H1 (cell line): ENCODE measurements at regions of chr19 and their contacts with region 1.

Region 1: GRCh38 chr19:14048443-14049153 is 13.3 kb downstream of the PALM3 start:
- DNase-seq: peak; percentile 56 to 97
- H3K4me3 ChIP-seq: no peak overlapping the region
- H3K27ac ChIP-seq: no peak overlapping the region
- H3K4me1 ChIP-seq: no peaks in the 10 kb centered on the region; a peak in 1 of 7 replicates
- H3K27me3 ChIP-seq: no peaks in the 10 kb centered on the region
- CTCF ChIP-seq: peak; percentile 95 to 97 (median 96)
- EP300 ChIP-seq: no peak
- POLR2A ChIP-seq: no peak
- RAD21 ChIP-seq: peak; percentile 66 to 75

Region 2: GRCh38 chr19:13932911-13933393 is 115.6 kb before region 1 on chr19:
- CTCF ChIA-PET with region 1: interaction called, 19 read pairs
- POLR2A ChIA-PET with region 1: interaction called, 3 read pairs
- DNase-seq: no peak
- H3K4me3 ChIP-seq: no peak overlapping the region
- H3K27ac ChIP-seq: no peak overlapping the region
- H3K4me1 ChIP-seq: peaks cover 3 to 35% (median 15%) of the 10 kb centered on the region in 4 experiments
- H3K27me3 ChIP-seq: peaks cover 0 to 2% (median 0%) of the 10 kb centered on the region in 4 experiments; a peak in 1 of 7 replicates
- CTCF ChIP-seq: no peak
- EP300 ChIP-seq: no peak
- POLR2A ChIP-seq: no peak
- RAD21 ChIP-seq: no peak

Region 3: GRCh38 chr19:13986348-13986904 is 62.2 kb before region 1 on chr19:
- CTCF ChIA-PET with region 1: interaction called, 13 read pairs
- POLR2A ChIA-PET with region 1: no interaction called
- DNase-seq: peak; percentile 68 to 85
- H3K4me3 ChIP-seq: peak overlapping the region in 3 of 4 experiments; percentile 7 to 46 (median 26); a peak in 4 of 8 replicates
- H3K27ac ChIP-seq: peak overlapping the region; percentile 83; the same call in 1 of the 2 replicates
- H3K4me1 ChIP-seq: peaks cover 0 to 42% (median 36%) of the 10 kb centered on the region in 4 experiments; a peak in 6 of 7 replicates
- H3K27me3 ChIP-seq: no peaks in the 10 kb centered on the region
- CTCF ChIP-seq: no peak
- EP300 ChIP-seq: no peak
- POLR2A ChIP-seq: peak in 1 of 2 experiments; percentile 51; a peak in 1 of 3 replicates
- RAD21 ChIP-seq: no peak

Region 4: GRCh38 chr19:14031719-14032480 is 16.7 kb before region 1 on chr19 and contains the start of gene IL27RA:
- CTCF ChIA-PET with region 1: interaction called, 39 read pairs
- POLR2A ChIA-PET with region 1: interaction called, 4 read pairs
- DNase-seq: peak; percentile 31 to 84
- H3K4me3 ChIP-seq: peak within 1 kb of the TSS; percentile 58 to 78 (median 68)
- H3K27ac ChIP-seq: no peak within 1 kb of the TSS
- H3K4me1 ChIP-seq: peaks cover 0 to 9% (median 3%) of the 10 kb centered on the region in 4 experiments; a peak in 6 of 7 replicates
- H3K27me3 ChIP-seq: peaks cover 0 to 12% (median 9%) of the 10 kb centered on the region in 4 experiments; a peak in 5 of 7 replicates
- CTCF ChIP-seq: peak; percentile 76 to 82 (median 78)
- EP300 ChIP-seq: no peak
- POLR2A ChIP-seq: no peak
- RAD21 ChIP-seq: peak; percentile 58 to 68
- total RNA-seq, gene IL27RA: 14.7 and 15.1 TPM in 2 replicates

Region 5: DNA sequence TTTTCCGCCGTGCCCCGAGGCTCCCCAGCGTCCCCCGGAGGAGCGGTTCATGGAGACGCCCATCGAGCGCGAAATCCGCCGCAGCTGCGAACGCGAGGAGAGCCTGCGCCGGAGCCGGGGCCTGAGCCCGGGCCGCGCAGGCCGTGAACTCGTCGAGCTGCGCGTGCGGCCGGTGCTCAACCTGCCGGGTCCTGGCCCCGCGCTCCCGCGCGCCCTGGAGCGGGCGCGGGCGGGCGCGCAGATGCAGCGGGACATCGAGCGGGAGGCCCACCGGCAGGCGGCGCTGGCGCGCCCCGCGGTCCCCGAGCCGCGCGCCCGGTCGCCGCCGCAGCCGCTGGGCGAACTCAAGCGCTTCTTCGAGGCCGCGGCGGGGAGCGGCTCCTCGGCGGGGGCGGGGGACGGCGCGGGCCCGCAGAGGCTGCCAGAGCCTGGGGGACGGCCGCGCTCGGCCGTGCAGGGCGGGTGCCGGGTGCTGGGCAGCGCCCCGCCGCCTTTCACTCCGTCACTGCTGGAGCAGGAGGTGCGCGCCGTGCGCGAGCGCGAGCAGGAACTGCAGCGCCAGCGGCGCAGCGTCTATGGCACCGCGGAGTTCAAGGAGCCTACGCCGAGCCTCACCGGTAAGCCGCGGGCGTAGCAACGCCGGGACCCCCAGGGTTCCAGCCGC is 24.8 kb after region 1 on chr19:
- CTCF ChIA-PET with region 1: interaction called, 66 read pairs
- POLR2A ChIA-PET with region 1: no interaction called
- DNase-seq: peak in 1 of 2 experiments; percentile 86
- H3K4me3 ChIP-seq: peak overlapping the region; percentile 46 to 66 (median 50)
- H3K27ac ChIP-seq: no peak overlapping the region
- H3K4me1 ChIP-seq: peaks cover 0 to 15% (median 9%) of the 10 kb centered on the region in 4 experiments; a peak in 5 of 7 replicates
- H3K27me3 ChIP-seq: peaks cover 17 to 40% (median 32%) of the 10 kb centered on the region in 4 experiments
- CTCF ChIP-seq: peak; percentile 62 to 89 (median 83)
- EP300 ChIP-seq: no peak
- POLR2A ChIP-seq: no peak
- RAD21 ChIP-seq: peak in 1 of 2 experiments; percentile 19; a peak in 2 of 4 replicates

Region 6: GRCh38 chr19:14127929-14128509 is 79.4 kb after region 1 on chr19:
- CTCF ChIA-PET with region 1: no interaction called
- POLR2A ChIA-PET with region 1: no interaction called
- DNase-seq: no peak
- H3K4me3 ChIP-seq: no peak overlapping the region
- H3K27ac ChIP-seq: no peak overlapping the region
- H3K4me1 ChIP-seq: no peaks in the 10 kb centered on the region
- H3K27me3 ChIP-seq: no peaks in the 10 kb centered on the region
- CTCF ChIP-seq: no peak
- EP300 ChIP-seq: no peak
- POLR2A ChIP-seq: no peak
- RAD21 ChIP-seq: no peak